Gastrocnemius medialis (tissue), 4 donors: ENCODE measurements at regions of chr7 and their contacts with region 1.

Region 1: DNA sequence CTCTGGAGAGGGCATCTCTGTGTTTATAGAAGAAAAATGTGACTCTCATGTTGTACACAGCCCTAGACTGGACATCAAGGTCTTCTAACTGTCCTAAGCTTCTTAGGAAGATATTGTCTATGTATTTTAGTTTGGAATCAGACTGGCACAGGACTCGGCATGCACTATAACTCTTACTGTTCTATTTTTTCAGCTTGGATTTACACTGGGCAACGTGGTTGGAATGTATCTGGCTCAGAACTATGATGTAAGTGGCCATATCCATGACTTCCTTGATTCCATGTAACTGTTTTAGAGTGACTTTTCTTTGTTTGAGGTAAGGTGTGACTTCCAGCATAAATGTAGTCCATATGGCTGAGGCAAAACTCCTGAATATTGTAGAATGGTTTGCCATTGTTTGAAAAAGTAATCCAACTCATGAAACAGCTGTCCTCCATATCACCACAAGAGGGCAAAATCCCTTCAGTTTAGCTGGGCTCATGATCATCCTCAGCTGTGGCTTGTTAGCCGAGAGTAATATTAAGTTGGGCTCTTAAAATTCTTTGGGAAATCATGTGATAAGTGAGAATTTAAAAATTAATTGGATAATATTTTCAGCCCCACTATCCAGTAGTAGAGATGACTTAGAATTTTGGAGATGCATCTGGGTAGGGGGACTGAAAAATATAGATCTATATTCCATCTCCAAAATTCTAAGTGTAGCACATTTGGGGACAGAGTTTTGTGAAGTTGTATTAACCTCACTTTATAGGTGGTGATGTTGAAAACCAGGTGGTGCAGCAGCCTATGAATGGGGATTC is 10.4 kb downstream of the STMP1 start:
- DNase-seq: no peak
- ATAC-seq: peak; percentile 68 to 71
- H3K4me3 ChIP-seq: no peak overlapping the region
- H3K27ac ChIP-seq: peak overlapping the region; percentile 47 to 62 (median 55)
- H3K4me1 ChIP-seq: peaks cover 61 to 80% of the 10 kb centered on the region in 2 donors
- H3K27me3 ChIP-seq: no peaks in the 10 kb centered on the region
- CTCF ChIP-seq: peak; percentile 65 to 83 (median 75)
- POLR2A ChIP-seq: no peak

Region 2: DNA sequence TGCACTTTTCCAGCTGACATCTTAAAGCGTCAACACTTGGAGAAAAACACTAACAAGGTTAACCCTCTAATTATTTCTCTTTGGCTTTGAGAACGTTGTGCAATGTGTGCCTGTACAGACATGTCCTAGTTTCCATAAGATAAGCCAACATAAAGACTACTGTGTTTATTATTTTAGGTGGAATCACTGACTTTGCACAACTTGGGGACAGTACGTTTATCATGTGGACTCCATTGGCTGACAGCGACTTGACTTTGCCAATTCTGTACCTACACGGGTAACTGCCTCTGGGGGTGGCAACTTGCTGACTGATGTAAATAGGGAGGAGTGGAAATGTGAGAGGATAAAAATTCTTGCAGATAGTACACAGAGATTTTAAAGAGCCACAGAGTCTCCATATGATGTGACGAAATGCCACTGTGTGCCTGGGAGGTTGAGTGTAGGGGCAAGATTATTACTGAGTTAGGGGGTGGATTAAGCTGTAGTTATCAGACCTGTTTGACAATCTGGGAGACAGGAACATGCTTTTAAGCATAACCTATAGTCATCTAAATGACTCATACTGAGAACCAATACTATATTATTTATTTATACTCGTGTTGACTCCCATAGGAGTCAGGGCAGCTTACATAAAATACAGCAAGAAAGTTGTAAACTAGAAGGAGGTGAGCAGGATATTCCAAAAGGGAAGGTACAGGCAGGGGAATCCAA is 34.3 kb after region 1 on chr7:
- in situ Hi-C with region 1: no loop called
- intact Hi-C with region 1: loop called (anchors 2 kb)
- DNase-seq: no peak
- ATAC-seq: no peak
- H3K4me3 ChIP-seq: no peak overlapping the region
- H3K27ac ChIP-seq: peak overlapping the region in 3 of 4 donors; percentile 5 to 40 (median 14)
- H3K4me1 ChIP-seq: peaks cover 0 to 4% of the 10 kb centered on the region in 2 donors
- H3K27me3 ChIP-seq: no peaks in the 10 kb centered on the region
- CTCF ChIP-seq: no peak
- POLR2A ChIP-seq: no peak

Region 3: DNA sequence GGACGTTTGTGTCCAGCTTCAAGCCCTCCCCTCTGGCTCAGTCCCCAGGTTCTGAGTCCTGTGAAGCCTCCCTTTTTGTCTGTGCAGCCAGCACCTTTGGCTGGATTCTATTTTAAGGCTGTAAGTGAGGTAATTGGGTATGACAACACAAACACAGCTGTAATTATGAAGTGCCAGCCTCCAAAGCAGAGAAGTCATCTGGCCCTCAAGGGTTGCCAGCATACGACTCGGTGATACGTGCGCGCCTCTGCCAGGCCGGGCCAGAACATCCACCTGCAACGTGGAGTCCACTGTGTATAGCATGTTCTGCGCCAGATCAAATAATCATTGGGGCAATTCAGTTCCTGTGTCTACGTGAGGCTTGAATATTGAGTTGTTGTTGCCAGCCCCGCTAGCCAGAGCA is 82.6 kb after region 1 on chr7:
- in situ Hi-C with region 1: no loop called
- intact Hi-C with region 1: loop called (anchors 2 kb)
- DNase-seq: peak; percentile 63 to 79
- ATAC-seq: peak; percentile 96 to 98
- H3K4me3 ChIP-seq: no peak overlapping the region
- H3K27ac ChIP-seq: peak overlapping the region; percentile 38 to 61 (median 57)
- H3K4me1 ChIP-seq: peaks cover 14 to 21% of the 10 kb centered on the region in 2 donors
- H3K27me3 ChIP-seq: peaks cover 0 to 3% (median 0%) of the 10 kb centered on the region in 3 donors
- CTCF ChIP-seq: no peak
- POLR2A ChIP-seq: no peak

Region 4: GRCh38 chr7:135795846-135796570 is 123.2 kb after region 1 on chr7:
- in situ Hi-C with region 1: loop called in 1 of 4 experiments (anchors 10 kb)
- intact Hi-C with region 1: no loop called
- DNase-seq: no peak
- ATAC-seq: no peak
- H3K4me3 ChIP-seq: no peak overlapping the region
- H3K27ac ChIP-seq: no peak overlapping the region
- H3K4me1 ChIP-seq: no peaks in the 10 kb centered on the region
- H3K27me3 ChIP-seq: no peaks in the 10 kb centered on the region
- CTCF ChIP-seq: no peak
- POLR2A ChIP-seq: no peak